Activated T-helper 1 cell treated with anti-CD3 and anti-CD28 coated beads, Interleukin-12 subunit alpha, Interleukin-12 subunit beta, Interleukin-2, Interleukin-4 antibody, amounts not matched to agents 30 ng/mL and 10 ng/mL and 1 ng/mL, durations not matched to agents 14 hours and 24 hours and 36 hours (primary cell): ENCODE measurements at regions of chr2 and their contacts with region 1.

Region 1: GRCh38 chr2:169694113-169694903 is at the starts of genes CFAP210 and PHOSPHO2:
- DNase-seq: peak; percentile 98
- H3K4me3 Mint-ChIP-seq: peak within 1 kb of the TSS; percentile 88
- H3K27ac Mint-ChIP-seq: peak within 1 kb of the TSS; percentile 88
- H3K4me1 Mint-ChIP-seq: peaks cover 9% of the 10 kb centered on the region
- H3K27me3 Mint-ChIP-seq: peaks cover 17% of the 10 kb centered on the region
- total RNA-seq, gene CFAP210: not detected in 2 replicates
- total RNA-seq, gene PHOSPHO2: 4.5 and 4.6 TPM in 2 replicates

Region 2: DNA sequence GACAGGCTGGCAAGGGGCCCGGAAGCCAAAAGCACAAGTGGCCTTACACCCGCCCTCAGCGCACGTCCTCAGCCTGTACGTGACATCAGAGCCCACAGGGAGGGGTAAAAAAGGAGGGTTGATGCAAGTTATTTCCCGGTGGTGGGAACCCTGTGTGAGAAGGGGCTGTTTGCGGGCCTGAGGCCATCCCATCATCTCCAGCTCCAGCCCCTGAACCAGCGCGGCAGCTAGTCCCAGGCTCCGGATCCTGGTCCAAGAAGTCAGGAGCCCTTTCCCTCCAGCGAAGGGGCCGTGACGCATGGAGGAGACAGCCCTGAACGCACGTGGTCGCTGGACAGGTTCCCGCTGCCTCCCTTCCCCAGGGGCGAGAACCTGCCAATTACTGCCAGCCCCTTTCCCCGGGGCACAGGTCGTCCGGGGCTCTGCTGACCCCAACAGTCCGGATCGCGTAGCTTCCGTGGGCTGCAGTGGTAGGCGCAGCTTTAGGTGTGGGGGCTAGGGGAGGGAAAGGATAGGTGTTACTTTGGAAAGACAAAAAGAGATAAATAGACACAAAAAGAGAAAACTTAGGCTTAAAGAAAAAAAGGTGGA is 330.7 kb before region 1 on chr2:
- intact Hi-C with region 1: loop called (anchors 5 kb)
- DNase-seq: peak; percentile 41
- H3K4me3 Mint-ChIP-seq: peak overlapping the region; percentile 88
- H3K27ac Mint-ChIP-seq: peak overlapping the region; percentile 75
- H3K4me1 Mint-ChIP-seq: peaks cover 31% of the 10 kb centered on the region
- H3K27me3 Mint-ChIP-seq: peaks cover 46% of the 10 kb centered on the region

Region 3: GRCh38 chr2:169573160-169573973 is 120.9 kb before region 1 on chr2 and contains the start of gene FASTKD1:
- intact Hi-C with region 1: loop called (anchors 1 kb)
- DNase-seq: peak; percentile 82
- H3K4me3 Mint-ChIP-seq: peak within 1 kb of the TSS; percentile 99
- H3K27ac Mint-ChIP-seq: peak within 1 kb of the TSS; percentile 90
- H3K4me1 Mint-ChIP-seq: peaks cover 32% of the 10 kb centered on the region
- H3K27me3 Mint-ChIP-seq: no peaks in the 10 kb centered on the region
- total RNA-seq, gene FASTKD1: 50.3 and 50.4 TPM in 2 replicates

Region 4: DNA sequence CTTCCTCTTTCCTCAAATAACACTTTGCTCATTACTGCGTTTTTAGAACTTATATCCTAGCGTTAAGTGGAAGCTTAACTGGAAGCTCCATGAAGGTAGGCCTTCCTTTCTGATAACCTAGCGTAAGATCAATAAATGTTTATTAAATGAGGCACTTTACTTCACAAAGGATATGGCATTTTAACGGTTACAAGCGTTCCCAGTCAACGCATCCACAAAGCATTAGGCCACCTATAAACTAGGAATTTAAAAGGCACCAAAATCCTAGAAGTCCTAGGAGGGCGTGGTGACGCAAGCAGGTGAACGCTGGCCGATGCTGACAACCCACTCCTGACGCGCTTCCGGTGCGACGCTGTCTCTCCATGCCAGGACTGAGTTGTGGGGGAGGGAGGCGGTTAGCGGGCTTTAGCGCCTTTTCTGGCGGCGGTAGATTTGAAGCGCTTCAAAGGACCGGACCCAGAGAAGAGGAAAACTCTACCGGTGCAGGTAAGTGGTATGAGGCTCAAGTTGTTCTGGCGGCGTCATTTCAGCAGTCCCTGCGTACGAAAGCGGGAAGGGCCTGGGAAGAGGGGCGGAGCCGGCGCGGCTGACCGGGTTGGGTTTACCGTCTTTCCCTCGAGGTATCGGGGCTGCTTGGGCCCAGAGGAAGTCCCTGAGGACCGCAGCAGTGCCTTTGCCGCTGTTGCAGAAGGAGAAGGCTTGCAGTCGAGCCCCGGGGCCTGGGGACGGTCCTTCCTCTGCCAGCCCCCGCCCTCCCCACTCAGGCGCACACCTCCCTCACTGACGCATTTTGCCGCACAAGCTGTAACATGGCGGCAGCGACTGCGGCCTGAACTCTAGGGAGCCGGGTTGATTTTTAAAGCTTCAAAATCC is 110.1 kb before region 1 on chr2 and contains the start of gene PPIG:
- intact Hi-C with region 1: loop called (anchors 1 kb)
- DNase-seq: peak; percentile 78
- H3K4me3 Mint-ChIP-seq: peak within 1 kb of the TSS; percentile 100
- H3K27ac Mint-ChIP-seq: peak within 1 kb of the TSS; percentile 100
- H3K4me1 Mint-ChIP-seq: peaks cover 21% of the 10 kb centered on the region
- H3K27me3 Mint-ChIP-seq: peaks cover 2% of the 10 kb centered on the region
- total RNA-seq, gene PPIG: 54.2 and 56.3 TPM in 2 replicates

Region 5: GRCh38 chr2:169683054-169683424 is 11.3 kb before region 1 on chr2:
- intact Hi-C with region 1: loop called (anchors 1 kb)
- DNase-seq: peak; percentile 24
- H3K4me3 Mint-ChIP-seq: no peak overlapping the region
- H3K27ac Mint-ChIP-seq: no peak overlapping the region
- H3K4me1 Mint-ChIP-seq: peaks cover 20% of the 10 kb centered on the region
- H3K27me3 Mint-ChIP-seq: peaks cover 5% of the 10 kb centered on the region

Region 6: DNA sequence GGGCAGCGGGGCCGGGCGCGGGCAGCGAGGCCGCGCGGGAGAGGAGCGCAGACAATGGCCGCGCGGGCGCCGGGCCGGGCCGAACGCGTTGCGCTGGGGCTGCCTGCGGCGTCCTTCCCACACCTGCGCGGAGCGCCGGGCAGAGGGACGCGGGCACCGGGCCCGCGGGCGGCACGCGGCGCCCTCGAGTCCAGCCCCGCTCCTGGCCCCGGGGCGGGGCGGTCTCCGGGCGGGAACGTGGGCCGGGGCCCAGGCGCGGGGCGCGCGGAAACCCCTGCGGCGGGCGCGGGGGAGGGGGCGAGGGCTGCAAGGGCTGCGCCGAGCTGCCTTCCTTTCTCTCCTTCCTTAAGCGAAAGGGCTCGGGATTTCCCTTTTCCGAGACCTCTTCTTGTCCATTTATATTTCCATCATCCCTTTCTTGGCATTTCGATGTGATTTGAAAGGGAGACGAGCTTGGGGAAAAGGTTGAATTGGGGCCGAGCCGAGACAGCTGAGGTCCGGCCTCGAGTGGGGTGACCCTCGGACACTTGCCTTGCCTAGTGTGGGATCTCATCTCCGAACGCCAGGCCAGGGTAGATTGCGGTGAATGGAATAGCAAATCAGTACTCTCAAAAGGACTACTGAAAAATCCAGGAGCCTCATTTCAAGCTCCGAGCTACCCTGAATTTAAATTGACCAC is 40.0 kb after region 1 on chr2:
- intact Hi-C with region 1: loop called (anchors 1 kb)
- DNase-seq: no peak
- H3K4me3 Mint-ChIP-seq: peak overlapping the region; percentile 85
- H3K27ac Mint-ChIP-seq: peak overlapping the region; percentile 40
- H3K4me1 Mint-ChIP-seq: peaks cover 31% of the 10 kb centered on the region
- H3K27me3 Mint-ChIP-seq: peaks cover 39% of the 10 kb centered on the region

Region 7: GRCh38 chr2:169928463-169928864 is 234.2 kb after region 1 on chr2:
- intact Hi-C with region 1: loop called (anchors 5 kb)
- DNase-seq: no peak
- H3K4me3 Mint-ChIP-seq: no peak overlapping the region
- H3K27ac Mint-ChIP-seq: no peak overlapping the region
- H3K4me1 Mint-ChIP-seq: no peaks in the 10 kb centered on the region
- H3K27me3 Mint-ChIP-seq: no peaks in the 10 kb centered on the region